B cell (primary cell): ENCODE measurements at regions of chr7 and their contacts with region 1.

Region 1: DNA sequence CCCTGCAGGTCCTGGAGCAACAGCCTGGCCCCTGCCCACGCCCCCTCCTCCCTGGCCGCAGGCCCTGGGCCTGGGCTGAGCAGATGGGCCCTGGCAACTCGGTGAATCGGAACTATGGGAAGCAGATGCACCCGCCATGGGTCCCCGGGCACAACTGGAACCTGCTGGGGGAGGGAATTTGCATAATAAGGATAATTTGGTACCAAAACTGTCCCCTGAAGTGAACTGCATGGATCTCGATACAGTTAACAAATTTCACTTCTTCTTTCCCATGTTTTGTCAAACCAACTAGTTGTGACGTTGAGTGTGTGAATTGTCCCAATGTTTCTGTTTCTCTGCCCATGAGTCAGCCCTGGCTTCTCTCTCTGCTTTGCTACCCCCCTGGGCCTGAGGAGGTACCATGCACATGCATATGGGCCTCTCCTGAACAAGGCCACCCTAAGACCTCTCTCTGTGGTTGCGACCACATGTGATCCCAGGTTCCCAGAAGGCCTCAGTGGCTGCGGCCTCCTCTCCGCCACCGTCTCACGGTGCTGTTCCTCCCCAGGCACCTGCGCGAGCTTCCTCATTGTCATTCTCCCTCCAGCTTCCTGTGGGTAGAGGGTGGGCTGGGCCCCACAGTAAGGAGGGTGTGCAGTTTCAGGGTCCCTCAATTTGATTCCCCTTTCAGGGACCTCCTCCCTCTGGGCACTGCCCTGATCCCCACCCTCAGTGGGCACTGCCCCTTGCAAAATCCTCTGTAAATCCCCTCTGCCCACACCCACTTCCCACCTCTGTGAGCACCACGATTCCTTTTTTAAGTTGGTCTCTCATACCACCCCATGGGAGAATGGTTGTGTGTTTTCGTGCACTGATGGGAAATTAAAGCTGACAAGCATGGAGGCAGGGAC is 40.0 kb downstream of the FIGNL1 start:
- DNase-seq: peak; percentile 87
- ATAC-seq: peak; percentile 63
- H3K4me3 ChIP-seq: no peak overlapping the region
- H3K4me3 Mint-ChIP-seq: peak overlapping the region; percentile 83
- H3K27ac ChIP-seq: peak overlapping the region; percentile 90 to 94
- H3K27ac Mint-ChIP-seq: peak overlapping the region; percentile 99
- H3K4me1 ChIP-seq: peaks cover 97% of the 10 kb centered on the region in 2 donors
- H3K4me1 Mint-ChIP-seq: peaks cover 95% of the 10 kb centered on the region
- H3K27me3 ChIP-seq: no peaks in the 10 kb centered on the region
- H3K27me3 Mint-ChIP-seq: no peaks in the 10 kb centered on the region
- CTCF ChIP-seq: no peak

Region 2: GRCh38 chr7:50147951-50148808 is 261.9 kb before region 1 on chr7:
- CTCF ChIA-PET with region 1: interaction called, 3 read pairs
- POLR2A ChIA-PET with region 1: no interaction called
- intact Hi-C with region 1: loop called (anchors 1 kb)
- DNase-seq: peak; percentile 82
- ATAC-seq: peak; percentile 74
- H3K4me3 ChIP-seq: no peak overlapping the region
- H3K4me3 Mint-ChIP-seq: peak overlapping the region; percentile 77
- H3K27ac ChIP-seq: peak overlapping the region; percentile 77 to 89
- H3K27ac Mint-ChIP-seq: peak overlapping the region; percentile 91
- H3K4me1 ChIP-seq: peaks cover 74 to 87% of the 10 kb centered on the region in 2 donors
- H3K4me1 Mint-ChIP-seq: peaks cover 87% of the 10 kb centered on the region
- H3K27me3 ChIP-seq: no peaks in the 10 kb centered on the region
- H3K27me3 Mint-ChIP-seq: no peaks in the 10 kb centered on the region
- CTCF ChIP-seq: no peak

Region 3: DNA sequence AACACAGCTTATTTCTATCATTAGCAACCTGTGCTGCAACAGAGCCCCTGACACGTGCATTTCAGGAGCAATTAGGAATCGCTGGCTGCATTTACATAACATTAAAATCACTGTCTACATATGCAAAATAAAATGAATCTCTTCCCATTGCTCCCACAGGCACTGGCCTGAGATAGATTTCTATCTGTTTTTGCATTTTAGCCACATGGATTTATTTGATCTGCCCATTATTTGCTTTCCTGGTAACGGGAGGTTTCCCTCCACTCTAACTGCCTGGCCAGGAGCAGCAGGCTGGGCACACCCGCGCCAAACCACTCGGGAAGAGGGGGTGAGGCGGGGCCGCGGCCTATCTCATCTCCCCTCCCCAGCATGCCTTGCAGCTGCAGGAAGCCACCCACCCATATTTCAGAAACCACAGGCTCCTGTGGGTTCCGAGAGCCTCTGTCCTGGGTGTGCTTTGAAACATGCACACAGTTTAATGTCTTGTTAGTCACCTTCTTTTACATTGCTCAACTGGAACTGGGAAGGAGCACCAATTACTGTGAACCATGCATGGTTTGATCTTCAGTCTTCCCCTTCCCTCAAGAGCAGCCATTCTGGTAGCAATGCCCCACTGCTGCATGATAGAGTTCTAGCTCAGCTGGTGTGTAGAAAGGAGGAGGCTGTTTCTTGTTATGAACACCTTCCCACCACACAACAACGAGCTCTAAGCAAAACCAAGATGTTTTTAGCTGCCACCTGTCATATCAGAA is 143.3 kb before region 1 on chr7:
- CTCF ChIA-PET with region 1: interaction called, 3 read pairs
- POLR2A ChIA-PET with region 1: no interaction called
- intact Hi-C with region 1: loop called (anchors 2 kb)
- DNase-seq: peak; percentile 58
- ATAC-seq: peak; percentile 83
- H3K4me3 ChIP-seq: peak overlapping the region in 4 of 5 experiments; percentile 20 to 55 (median 31)
- H3K4me3 Mint-ChIP-seq: peak overlapping the region; percentile 73
- H3K27ac ChIP-seq: peak overlapping the region; percentile 57 to 71
- H3K27ac Mint-ChIP-seq: peak overlapping the region; percentile 95
- H3K4me1 ChIP-seq: peaks cover 94% of the 10 kb centered on the region in 2 donors
- H3K4me1 Mint-ChIP-seq: peaks cover 92% of the 10 kb centered on the region
- H3K27me3 ChIP-seq: no peaks in the 10 kb centered on the region
- H3K27me3 Mint-ChIP-seq: no peaks in the 10 kb centered on the region
- CTCF ChIP-seq: no peak

Region 4: GRCh38 chr7:50397320-50397970 is 12.7 kb before region 1 on chr7:
- CTCF ChIA-PET with region 1: interaction called, 39 read pairs
- POLR2A ChIA-PET with region 1: interaction called, 28 read pairs
- intact Hi-C with region 1: loop called (anchors 1 kb)
- DNase-seq: peak; percentile 60
- ATAC-seq: no peak
- H3K4me3 ChIP-seq: peak overlapping the region in 1 of 5 experiments; percentile 23
- H3K4me3 Mint-ChIP-seq: peak overlapping the region; percentile 75
- H3K27ac ChIP-seq: peak overlapping the region; percentile 86 to 94
- H3K27ac Mint-ChIP-seq: peak overlapping the region; percentile 97
- H3K4me1 ChIP-seq: peaks cover 65 to 70% of the 10 kb centered on the region in 2 donors
- H3K4me1 Mint-ChIP-seq: peaks cover 77% of the 10 kb centered on the region
- H3K27me3 ChIP-seq: no peaks in the 10 kb centered on the region
- H3K27me3 Mint-ChIP-seq: no peaks in the 10 kb centered on the region
- CTCF ChIP-seq: no peak

Region 5: GRCh38 chr7:50595491-50596102 is 185.5 kb after region 1 on chr7:
- CTCF ChIA-PET with region 1: no interaction called
- POLR2A ChIA-PET with region 1: no interaction called
- intact Hi-C with region 1: no loop called
- DNase-seq: no peak
- ATAC-seq: no peak
- H3K4me3 ChIP-seq: no peak overlapping the region
- H3K4me3 Mint-ChIP-seq: no peak overlapping the region
- H3K27ac ChIP-seq: no peak overlapping the region
- H3K27ac Mint-ChIP-seq: no peak overlapping the region
- H3K4me1 ChIP-seq: no peaks in the 10 kb centered on the region
- H3K4me1 Mint-ChIP-seq: no peaks in the 10 kb centered on the region
- H3K27me3 ChIP-seq: no peaks in the 10 kb centered on the region
- H3K27me3 Mint-ChIP-seq: peaks cover 26% of the 10 kb centered on the region
- CTCF ChIP-seq: no peak

Region 6: DNA sequence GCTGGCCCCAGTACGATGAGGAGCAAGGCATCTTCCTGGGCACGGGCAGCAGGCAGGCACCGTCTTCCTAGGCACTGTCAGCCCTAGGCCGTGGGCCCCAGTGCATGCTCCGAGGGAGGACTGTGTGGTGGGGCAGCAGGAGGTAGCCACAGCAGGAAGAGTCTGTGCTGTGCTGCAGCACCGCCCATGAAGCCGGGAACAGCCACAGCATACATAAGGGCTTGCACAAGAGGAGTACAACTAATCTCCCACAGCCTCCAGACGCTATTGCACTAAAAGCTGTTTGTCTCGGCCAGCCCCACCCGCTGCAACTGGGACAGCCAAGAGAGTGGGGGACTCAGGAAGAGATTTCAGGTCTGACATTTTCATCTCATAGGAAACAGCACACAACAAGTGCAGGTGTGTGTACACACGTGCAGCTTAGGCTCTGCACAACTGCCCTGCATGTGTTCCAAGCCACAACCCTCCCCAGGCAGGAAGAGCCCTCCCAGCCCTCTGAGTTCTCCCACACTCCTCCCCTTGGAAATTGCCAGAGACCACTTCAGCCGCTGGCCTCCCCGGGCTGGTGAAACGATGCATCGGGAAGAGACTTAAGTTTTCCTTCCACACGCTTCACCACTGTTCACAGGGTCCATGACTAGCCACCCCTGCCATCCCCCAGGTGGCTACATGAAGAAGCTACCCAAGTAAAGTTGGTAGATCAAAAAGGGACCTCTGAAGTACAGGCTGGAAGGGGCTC is 243.2 kb after region 1 on chr7:
- CTCF ChIA-PET with region 1: no interaction called
- POLR2A ChIA-PET with region 1: no interaction called
- intact Hi-C with region 1: no loop called
- DNase-seq: no peak
- ATAC-seq: no peak
- H3K4me3 ChIP-seq: no peak overlapping the region
- H3K4me3 Mint-ChIP-seq: no peak overlapping the region
- H3K27ac ChIP-seq: no peak overlapping the region
- H3K27ac Mint-ChIP-seq: no peak overlapping the region
- H3K4me1 ChIP-seq: no peaks in the 10 kb centered on the region
- H3K4me1 Mint-ChIP-seq: peaks cover 7% of the 10 kb centered on the region
- H3K27me3 ChIP-seq: peaks cover 0 to 3% (median 0%) of the 10 kb centered on the region in 4 experiments
- H3K27me3 Mint-ChIP-seq: peaks cover 12% of the 10 kb centered on the region
- CTCF ChIP-seq: no peak

Region 7: GRCh38 chr7:51569581-51569980 is 1159.5 kb after region 1 on chr7:
- CTCF ChIA-PET with region 1: no interaction called
- POLR2A ChIA-PET with region 1: no interaction called
- intact Hi-C with region 1: no loop called
- DNase-seq: no peak
- ATAC-seq: no peak
- H3K4me3 ChIP-seq: no peak overlapping the region
- H3K4me3 Mint-ChIP-seq: no peak overlapping the region
- H3K27ac ChIP-seq: no peak overlapping the region
- H3K27ac Mint-ChIP-seq: no peak overlapping the region
- H3K4me1 ChIP-seq: no peaks in the 10 kb centered on the region
- H3K4me1 Mint-ChIP-seq: no peaks in the 10 kb centered on the region
- H3K27me3 ChIP-seq: no peaks in the 10 kb centered on the region
- H3K27me3 Mint-ChIP-seq: no peaks in the 10 kb centered on the region
- CTCF ChIP-seq: no peak